ENCODE measurements at regions of chr12 and their contacts with region 1.

Region 1: GRCh38 chr12:42568952-42569915 is 20.3 kb downstream of the PRICKLE1 start:
- DNase-seq: no peak
- H3K4me3 ChIP-seq: no peak overlapping the region
- H3K27ac ChIP-seq: no peak overlapping the region
- H3K4me1 ChIP-seq: no peaks in the 10 kb centered on the region
- H3K27me3 ChIP-seq: no peaks in the 10 kb centered on the region
- CTCF ChIP-seq: peak in 2 of 3 experiments; percentile 27 to 49
- POLR2A ChIP-seq: no peak

Region 2: DNA sequence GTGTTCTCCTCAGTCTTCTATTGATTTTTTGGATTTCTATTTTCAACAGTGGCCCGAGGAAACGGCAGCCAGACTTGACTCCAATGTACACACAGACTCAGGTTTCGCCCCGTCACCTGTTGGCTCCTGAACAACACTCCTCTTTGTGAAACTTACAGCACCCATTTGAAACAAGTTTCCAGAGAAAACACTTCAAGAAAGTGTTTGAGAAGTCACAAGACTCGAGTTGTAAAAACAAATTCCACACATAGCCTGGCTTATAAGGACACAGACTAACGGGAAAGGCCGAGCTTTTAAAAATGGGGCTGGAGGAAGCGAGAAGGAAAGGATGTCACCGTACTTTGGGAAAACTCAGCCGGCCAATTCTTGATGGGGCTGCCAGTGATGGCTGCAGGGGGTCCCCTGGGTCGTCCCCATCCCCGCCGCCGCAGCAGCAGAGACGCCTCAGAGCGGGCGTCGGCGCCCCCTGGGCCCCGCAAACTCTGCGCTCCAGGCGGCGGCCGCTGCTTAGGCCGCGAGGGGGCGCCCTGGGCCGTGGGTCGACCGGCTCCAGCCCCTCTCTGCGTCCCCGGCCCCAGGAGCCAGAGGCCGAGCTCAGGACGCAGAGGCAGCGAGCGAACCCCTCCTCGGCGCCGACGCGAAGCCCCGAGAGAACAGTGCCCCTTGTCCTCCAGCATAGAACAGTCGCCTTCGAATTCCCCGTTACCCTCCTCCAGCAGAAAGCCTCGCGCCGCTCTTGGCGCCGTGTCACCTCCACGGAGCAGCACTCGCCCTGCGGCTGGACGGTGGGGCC is 86.6 kb before region 1 on chr12:
- intact Hi-C with region 1: loop called (anchors 10 kb)
- DNase-seq: peak; percentile 83
- H3K4me3 ChIP-seq: peak overlapping the region; percentile 83 to 84
- H3K27ac ChIP-seq: peak overlapping the region; percentile 83 to 90
- H3K4me1 ChIP-seq: peaks cover 12% of the 10 kb centered on the region
- H3K27me3 ChIP-seq: no peaks in the 10 kb centered on the region
- CTCF ChIP-seq: peak; percentile 83 to 90 (median 87)
- POLR2A ChIP-seq: no peak

Region 3: DNA sequence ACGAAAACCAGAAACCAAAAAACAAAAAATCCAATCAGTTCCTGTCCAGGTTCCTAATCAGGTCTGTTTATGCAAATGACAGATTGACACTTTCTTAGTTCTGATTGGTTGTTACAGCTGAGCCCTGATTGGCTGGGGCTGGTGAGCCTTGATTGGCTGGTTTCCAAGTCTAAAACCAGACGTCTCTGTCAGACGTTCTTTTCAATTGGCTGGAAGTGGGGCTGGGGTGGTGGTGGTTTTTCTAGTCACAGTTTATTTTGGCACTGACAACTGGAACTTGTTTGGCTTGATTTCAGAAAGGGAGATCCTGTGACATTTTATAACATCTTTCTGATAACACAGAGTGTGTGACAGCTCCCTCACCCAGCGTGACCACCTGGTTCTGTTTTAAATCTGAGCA is 56.4 kb after region 1 on chr12:
- intact Hi-C with region 1: no loop called
- DNase-seq: peak; percentile 58
- H3K4me3 ChIP-seq: no peak overlapping the region
- H3K27ac ChIP-seq: no peak overlapping the region
- H3K4me1 ChIP-seq: no peaks in the 10 kb centered on the region
- H3K27me3 ChIP-seq: no peaks in the 10 kb centered on the region
- CTCF ChIP-seq: no peak
- POLR2A ChIP-seq: no peak

Measured in testis (tissue), 5 donors.